Calu3 (cell line): ENCODE measurements at regions of chr6 and their contacts with region 1.

Region 1: GRCh38 chr6:32868257-32868788 is 14.3 kb downstream of the PSMB9 start:
- DNase-seq: peak; percentile 88
- H3K4me3 Mint-ChIP-seq: no peak overlapping the region
- H3K27ac Mint-ChIP-seq: no peak overlapping the region
- H3K4me1 Mint-ChIP-seq: peaks cover 9% of the 10 kb centered on the region
- H3K27me3 Mint-ChIP-seq: peaks cover 26% of the 10 kb centered on the region
- CTCF ChIP-seq: peak; percentile 90

Region 2: DNA sequence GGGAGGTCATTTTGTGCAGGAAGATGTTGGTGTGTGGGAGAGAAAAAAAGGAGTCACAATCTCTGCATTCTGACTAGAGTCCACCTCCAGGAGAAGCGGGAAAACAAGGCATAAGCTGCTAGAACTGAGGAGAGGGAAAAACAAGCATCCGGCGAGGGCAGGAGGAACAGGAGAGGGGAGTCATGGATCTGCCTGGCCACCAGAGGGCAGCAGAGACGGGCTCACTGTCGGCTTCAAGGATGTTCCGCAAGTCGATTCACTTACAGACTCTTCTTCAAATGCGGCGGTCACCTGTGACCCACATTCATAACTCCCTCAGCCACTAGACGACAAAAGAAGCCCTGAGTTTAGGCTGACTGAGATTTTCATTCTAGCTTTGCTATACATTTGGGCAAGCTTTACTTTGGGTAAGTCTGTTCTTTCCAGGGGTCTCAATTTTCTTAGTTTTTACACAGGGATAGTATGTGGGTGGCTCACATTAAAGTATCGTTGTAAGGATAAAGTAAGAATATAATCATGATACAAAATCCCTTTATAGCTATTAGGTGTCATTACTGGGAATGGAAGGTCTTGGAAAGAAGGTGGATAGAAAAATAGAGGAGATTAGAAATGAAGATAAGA is 454.8 kb before region 1 on chr6:
- CTCF ChIA-PET with region 1: no interaction called
- intact Hi-C with region 1: loop called (anchors 10 kb)
- DNase-seq: peak; percentile 94
- H3K4me3 Mint-ChIP-seq: no peak overlapping the region
- H3K27ac Mint-ChIP-seq: no peak overlapping the region
- H3K4me1 Mint-ChIP-seq: peaks cover 21% of the 10 kb centered on the region
- H3K27me3 Mint-ChIP-seq: peaks cover 84% of the 10 kb centered on the region
- CTCF ChIP-seq: peak; percentile 96

Region 3: DNA sequence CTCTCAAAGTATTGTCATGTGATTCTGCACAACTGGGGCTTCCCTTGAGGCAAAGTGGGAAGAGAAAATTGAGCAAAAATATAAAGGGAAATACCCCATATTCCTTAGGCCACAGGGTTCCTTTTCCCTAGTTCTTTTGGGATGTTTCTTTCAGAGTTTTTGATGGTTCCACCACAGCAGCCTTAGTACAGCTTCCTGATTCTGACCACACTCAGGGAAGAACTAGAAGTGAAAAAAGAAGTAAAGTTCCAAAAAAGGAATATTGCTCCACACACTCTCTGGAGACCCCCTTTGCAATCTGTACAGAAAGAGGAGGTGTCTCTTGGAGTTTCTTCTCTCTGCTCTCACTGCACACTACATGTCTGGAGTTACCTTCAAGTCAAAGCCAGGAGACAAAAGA is 155.1 kb before region 1 on chr6:
- CTCF ChIA-PET with region 1: no interaction called
- intact Hi-C with region 1: loop called (anchors 5 kb)
- DNase-seq: no peak
- H3K4me3 Mint-ChIP-seq: no peak overlapping the region
- H3K27ac Mint-ChIP-seq: no peak overlapping the region
- H3K4me1 Mint-ChIP-seq: no peaks in the 10 kb centered on the region
- H3K27me3 Mint-ChIP-seq: peaks cover 41% of the 10 kb centered on the region
- CTCF ChIP-seq: no peak

Region 4: DNA sequence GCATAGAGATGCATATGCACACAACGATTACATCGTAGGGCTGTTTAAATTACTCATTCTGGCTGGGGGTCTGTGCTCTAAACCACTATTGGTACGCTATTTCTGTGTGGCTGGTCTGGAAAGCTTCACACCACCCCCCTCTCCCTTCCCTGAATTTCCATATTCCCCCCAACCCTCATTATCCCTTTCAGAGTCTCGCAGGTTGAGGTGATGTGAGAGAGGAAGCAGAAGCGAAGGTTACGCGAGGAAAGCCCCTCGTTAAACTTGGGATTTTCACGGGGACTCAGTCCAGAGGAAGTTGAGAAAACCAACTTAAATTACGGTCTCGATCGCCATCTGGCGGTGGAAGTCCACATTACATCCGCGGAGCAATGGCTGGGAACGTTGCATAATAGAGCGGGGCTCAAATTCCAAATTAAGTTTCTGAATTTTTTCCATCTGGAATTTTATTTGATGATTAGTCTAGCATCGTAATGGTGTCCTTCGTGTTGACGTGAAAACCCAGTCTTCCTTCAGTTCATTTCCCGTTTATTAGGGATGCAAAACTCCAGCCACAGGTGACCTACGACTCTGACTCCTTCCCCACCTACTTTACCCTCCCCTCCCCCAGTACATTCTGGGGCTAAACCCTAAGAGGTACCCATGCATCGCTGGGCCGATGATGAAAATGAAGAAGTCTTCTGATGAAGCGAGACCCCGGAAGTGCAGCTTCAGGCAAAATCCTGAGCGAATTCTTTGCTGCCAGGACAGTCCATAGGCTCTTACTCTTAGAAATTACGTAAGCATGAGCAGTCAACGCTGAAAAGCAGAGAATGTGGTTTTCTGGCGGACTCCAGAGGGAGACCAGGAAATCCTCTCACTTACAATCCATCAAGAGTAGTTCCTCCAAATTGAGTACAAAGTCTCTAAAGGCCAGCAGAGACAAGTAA is 71.2 kb before region 1 on chr6:
- CTCF ChIA-PET with region 1: interaction called, 3 read pairs
- intact Hi-C with region 1: loop called (anchors 5 kb)
- DNase-seq: peak; percentile 80
- H3K4me3 Mint-ChIP-seq: peak overlapping the region; percentile 27
- H3K27ac Mint-ChIP-seq: no peak overlapping the region
- H3K4me1 Mint-ChIP-seq: peaks cover 7% of the 10 kb centered on the region
- H3K27me3 Mint-ChIP-seq: peaks cover 91% of the 10 kb centered on the region
- CTCF ChIP-seq: peak; percentile 89

Region 5: DNA sequence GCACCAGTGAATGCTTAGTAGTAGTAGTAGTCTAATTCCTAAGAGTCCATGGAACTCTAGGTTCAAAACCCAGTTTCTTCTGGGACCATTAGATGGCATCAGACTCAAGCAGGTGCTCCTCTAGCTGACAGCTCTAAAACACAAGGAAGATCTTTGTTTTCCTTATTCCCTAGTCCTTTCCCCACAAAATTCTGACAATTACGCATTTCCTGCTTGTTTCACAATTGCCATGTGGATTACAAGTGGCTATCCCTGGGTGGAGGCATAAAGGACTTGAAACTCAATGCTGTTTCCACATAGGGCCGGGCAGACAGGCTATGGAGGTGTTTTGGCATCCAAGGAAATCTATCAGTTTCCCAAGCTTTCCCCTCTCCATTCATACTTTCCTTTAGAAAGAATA is 42.4 kb before region 1 on chr6:
- CTCF ChIA-PET with region 1: interaction called, 34 read pairs
- intact Hi-C with region 1: loop called (anchors 1 kb)
- DNase-seq: peak; percentile 32
- H3K4me3 Mint-ChIP-seq: no peak overlapping the region
- H3K27ac Mint-ChIP-seq: no peak overlapping the region
- H3K4me1 Mint-ChIP-seq: no peaks in the 10 kb centered on the region
- H3K27me3 Mint-ChIP-seq: no peaks in the 10 kb centered on the region
- CTCF ChIP-seq: peak; percentile 25

Region 6: GRCh38 chr6:32843979-32844838 is 24.1 kb before region 1 on chr6 and contains the start of gene PSMB8:
- CTCF ChIA-PET with region 1: interaction called, 171 read pairs
- intact Hi-C with region 1: no loop called
- DNase-seq: peak; percentile 99
- H3K4me3 Mint-ChIP-seq: peak within 1 kb of the TSS; percentile 96
- H3K27ac Mint-ChIP-seq: peak within 1 kb of the TSS; percentile 84
- H3K4me1 Mint-ChIP-seq: peaks cover 26% of the 10 kb centered on the region
- H3K27me3 Mint-ChIP-seq: no peaks in the 10 kb centered on the region
- CTCF ChIP-seq: no peak
- total RNA-seq, gene PSMB8: 123 and 196 TPM in 2 replicates

Region 7: DNA sequence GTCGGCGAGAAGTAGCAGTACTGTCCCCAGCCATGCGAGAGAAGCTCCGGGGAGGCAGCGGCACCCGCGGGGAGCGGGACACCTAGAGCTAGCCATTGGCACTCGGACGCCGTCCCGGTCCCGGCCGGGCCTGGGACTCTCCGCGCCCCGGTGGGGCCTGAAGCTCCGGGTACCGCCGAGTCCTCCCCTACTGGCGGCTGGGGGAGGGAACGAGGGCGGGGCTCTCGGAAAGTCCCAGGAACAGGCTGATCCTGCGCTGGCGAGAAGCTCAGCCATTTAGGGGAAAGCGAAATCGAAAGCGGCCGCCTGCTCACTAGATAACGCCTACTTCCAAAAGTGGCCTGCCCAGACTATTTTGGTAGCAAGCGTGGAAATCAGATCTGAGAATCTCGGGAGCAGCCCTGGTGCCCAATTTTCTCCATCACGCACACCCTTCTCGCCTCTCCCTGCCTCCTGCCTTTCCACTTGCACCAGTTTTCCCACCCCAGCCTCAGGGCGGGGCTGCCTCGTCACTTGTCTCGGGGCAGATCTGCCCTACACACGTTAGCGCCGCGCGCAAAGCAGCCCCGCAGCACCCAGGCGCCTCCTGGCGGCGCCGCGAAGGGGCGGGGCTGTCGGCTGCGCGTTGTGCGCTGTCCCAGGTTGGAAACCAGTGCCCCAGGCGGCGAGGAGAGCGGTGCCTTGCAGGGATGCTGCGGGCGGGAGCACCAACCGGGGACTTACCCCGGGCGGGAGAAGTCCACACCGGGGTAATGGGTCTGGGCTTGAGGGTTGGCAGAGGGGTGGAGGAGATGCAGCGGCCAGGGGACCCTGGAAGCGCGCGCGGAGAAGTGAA is 14.6 kb before region 1 on chr6 and contains the starts of genes PSMB9 and TAP1:
- CTCF ChIA-PET with region 1: interaction called, 31 read pairs
- intact Hi-C with region 1: no loop called
- DNase-seq: peak; percentile 99
- H3K4me3 Mint-ChIP-seq: peak within 1 kb of the TSS; percentile 100
- H3K27ac Mint-ChIP-seq: peak within 1 kb of the TSS; percentile 92
- H3K4me1 Mint-ChIP-seq: peaks cover 30% of the 10 kb centered on the region
- H3K27me3 Mint-ChIP-seq: no peaks in the 10 kb centered on the region
- CTCF ChIP-seq: peak; percentile 87
- total RNA-seq, gene PSMB9: 120 and 201 TPM in 2 replicates
- total RNA-seq, gene TAP1: 75.1 and 141 TPM in 2 replicates